HEK293 (cell line): ENCODE measurements at regions of chr9 and their contacts with region 1.

Region 1: GRCh38 chr9:129626079-129626624 is at the start of gene NTMT1:
- H3K4me3 ChIP-seq: peak within 1 kb of the TSS; percentile 62
- H3K27ac ChIP-seq: peak within 1 kb of the TSS; percentile 61
- H3K4me1 ChIP-seq: peaks cover 3% of the 10 kb centered on the region; the same call in 1 of the 2 replicates
- CTCF ChIP-seq: peak; percentile 6; the same call in 1 of the 2 replicates

Region 2: DNA sequence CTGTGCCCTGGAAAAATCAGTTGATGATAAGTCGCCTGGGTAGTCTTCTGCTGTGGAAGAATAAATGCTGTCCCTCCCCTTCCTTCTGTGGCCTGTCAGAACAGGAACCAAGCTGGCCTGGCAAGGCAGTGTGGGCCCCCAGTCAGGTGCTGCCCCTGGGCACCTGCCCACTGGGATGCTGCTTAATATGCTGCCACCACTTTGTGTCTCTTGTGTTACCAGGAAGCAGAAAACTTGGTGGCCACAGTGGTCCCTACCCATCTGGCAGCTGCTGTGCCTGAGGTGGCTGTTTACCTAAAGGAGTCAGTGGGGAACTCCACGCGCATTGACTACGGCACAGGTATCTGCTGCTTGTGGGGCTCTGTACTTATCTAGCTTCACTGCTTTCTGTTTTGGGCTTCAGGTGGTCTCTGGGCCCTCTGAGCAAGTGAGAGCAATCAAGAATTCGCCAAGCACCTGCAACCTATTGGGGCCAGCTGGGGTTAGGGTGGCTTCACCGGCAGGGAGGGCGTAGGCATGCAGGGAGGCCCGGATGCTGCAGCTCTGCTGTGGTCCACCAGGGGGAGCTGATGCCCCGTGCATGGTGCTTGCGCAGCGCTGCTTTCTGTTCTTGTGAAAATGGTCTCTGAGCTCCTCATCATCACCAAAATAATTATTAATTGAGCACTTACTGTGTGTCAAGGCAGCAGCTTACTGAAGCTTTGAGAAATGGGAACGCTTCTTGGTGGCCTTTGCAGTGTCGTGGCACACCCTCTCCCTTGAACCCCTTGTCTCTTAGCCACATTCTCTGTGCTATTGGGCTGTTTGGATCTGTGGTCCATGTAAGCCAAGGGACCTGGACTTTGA is 494.6 kb before region 1 on chr9:
- CTCF ChIA-PET with region 1: interaction called, 507 read pairs
- POLR2A ChIA-PET with region 1: interaction called, 10 read pairs
- H3K4me3 ChIP-seq: no peak overlapping the region
- H3K27ac ChIP-seq: no peak overlapping the region
- H3K4me1 ChIP-seq: no peaks in the 10 kb centered on the region
- CTCF ChIP-seq: peak; percentile 86

Region 3: DNA sequence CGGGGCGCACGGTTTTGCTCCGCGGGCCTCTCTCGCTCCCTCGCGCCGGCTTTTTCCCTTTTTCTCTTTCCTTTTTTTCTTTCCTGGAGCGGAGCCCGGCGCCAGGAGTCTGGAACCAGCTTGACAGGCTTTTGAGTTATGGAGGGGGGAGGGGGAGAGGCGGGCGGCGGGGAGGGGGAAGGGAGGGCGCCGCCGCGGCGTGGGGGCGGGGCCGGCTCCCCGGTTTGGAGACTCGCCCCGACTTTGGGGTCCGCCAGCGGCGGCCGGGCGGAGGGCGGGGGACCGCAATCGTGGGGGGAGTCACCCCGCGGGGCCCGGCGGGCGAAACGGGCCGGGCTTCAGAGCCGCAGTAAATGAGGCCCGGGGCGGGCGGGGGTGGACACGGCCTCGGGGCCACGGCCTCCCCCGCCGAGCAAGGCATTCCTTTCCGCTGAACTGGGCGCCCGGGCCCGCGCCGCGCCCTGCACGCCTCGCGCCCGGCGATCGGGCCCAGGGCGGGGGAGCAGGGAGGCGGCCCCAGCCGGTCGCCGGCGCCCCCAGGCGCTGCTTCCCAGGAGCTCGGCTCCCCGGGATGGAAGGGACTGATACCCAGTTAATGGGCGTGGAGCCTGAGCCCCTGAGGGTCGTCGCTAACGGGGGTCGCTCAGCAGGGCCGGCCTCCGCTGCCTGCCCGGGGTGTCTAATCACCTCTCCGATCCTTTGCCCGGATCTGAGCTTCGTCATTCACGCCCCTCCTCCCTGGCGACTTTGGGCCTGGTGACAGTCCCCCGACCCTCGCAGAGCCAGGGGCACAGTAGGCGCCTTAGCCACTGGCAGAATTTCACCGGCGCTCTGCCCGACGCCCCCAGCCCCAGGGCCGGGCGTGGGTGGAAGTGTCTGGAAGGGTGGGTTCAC is 143.4 kb before region 1 on chr9:
- CTCF ChIA-PET with region 1: no interaction called
- POLR2A ChIA-PET with region 1: no interaction called
- H3K4me3 ChIP-seq: peak overlapping the region; percentile 29
- H3K27ac ChIP-seq: peak overlapping the region; percentile 87
- H3K4me1 ChIP-seq: no peaks in the 10 kb centered on the region; the same call in 1 of the 2 replicates
- CTCF ChIP-seq: no peak

Region 4: DNA sequence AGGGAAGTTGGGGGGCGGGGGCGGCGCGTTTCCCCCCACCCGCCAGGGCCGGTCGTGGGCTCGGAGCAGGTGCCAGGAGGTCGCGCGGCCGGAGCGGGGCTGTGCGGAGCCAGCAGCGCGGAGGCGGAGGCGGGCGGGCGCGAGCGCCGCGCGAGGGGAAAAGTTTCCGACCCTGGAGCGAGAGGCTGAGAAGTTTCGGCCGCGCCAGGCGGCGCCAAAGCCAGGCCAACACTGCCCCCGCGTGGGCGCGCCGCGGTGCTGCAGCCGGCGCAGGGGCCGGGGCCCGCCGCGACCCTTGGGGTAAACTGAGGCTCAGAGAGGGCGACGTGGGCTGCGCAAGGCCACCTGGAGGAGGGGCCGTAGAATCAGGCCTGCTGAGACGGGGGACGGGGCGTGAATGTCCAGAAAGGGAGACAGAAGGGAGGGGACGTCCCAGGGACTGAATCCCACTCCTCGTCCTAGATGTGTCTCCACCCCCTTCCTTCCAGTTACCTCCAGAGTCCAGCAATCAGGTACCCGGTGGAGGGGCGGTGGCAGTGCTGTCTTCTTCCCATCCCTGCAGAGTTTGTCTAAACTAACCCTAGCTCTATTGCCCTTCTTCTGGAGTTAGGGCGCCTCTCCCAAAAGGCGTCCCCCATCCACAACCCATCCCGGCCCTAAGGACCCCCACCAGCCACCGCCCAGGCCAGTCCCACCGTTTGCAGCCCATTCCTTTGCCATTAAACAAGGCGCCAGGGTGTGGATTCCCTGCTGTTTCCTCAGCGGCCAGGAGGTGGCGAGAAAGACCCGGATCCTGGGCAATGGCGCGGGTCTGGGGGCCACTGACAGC is 15.5 kb before region 1 on chr9:
- CTCF ChIA-PET with region 1: interaction called, 101 read pairs
- POLR2A ChIA-PET with region 1: no interaction called
- H3K4me3 ChIP-seq: peak overlapping the region; percentile 44
- H3K27ac ChIP-seq: peak overlapping the region; percentile 49; the same call in 1 of the 2 replicates
- H3K4me1 ChIP-seq: no peaks in the 10 kb centered on the region; the same call in 1 of the 2 replicates
- CTCF ChIP-seq: peak; percentile 76; the same call in 1 of the 2 replicates

Region 5: GRCh38 chr9:129641746-129642513 is 15.8 kb after region 1 on chr9 and contains the start of gene ASB6:
- CTCF ChIA-PET with region 1: interaction called, 28 read pairs
- POLR2A ChIA-PET with region 1: interaction called, 57 read pairs
- H3K4me3 ChIP-seq: peak within 1 kb of the TSS; percentile 79
- H3K27ac ChIP-seq: peak within 1 kb of the TSS; percentile 70
- H3K4me1 ChIP-seq: peaks cover 11% of the 10 kb centered on the region
- CTCF ChIP-seq: peak; percentile 100

Region 6: GRCh38 chr9:129783516-129784361 is 157.6 kb after region 1 on chr9:
- CTCF ChIA-PET with region 1: interaction called, 18 read pairs
- POLR2A ChIA-PET with region 1: interaction called, 3 read pairs
- H3K4me3 ChIP-seq: no peak overlapping the region
- H3K27ac ChIP-seq: no peak overlapping the region
- H3K4me1 ChIP-seq: no peaks in the 10 kb centered on the region
- CTCF ChIP-seq: peak; percentile 74

Region 7: DNA sequence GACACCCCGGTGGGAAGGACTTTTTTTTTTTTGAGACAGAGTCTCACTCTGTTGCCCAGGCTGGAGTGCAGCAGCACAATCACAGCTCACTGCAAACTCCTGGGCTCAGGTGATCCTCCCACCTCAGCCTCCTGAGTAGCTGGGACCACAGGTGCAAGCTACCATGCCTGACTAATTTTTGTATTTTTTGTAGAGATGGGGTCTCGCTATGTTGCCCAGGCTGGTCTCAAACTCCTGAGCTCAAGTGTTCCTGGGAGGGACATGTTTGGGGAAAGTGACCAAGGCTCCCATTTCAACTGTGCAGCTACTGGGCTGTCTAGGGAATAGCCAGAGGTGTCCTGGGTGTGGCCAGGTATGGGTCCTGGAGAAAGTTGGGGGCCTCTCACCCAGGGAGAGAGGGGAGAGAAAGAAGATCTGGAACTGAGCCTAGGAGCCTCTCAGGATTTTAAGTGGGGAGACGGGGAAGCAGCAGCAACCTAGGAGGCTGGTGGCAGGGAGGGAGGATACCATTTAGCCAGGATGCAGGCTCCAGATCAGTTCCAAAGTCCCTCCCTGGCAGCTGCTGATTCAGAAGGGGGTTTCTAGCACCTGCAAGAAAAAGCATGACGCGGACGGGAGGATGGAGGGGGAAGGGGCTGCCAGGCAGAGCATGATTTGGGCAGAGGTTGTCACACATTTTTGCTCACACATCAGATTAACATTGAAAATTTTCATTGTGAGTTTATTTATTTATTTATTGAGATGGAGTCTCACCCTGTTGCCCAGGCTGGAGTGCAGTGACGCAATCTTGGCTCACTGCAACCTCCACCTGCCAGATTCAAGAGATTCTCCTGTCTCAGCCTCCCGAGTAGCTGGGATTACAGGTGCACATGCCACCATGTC is 170.1 kb after region 1 on chr9:
- CTCF ChIA-PET with region 1: interaction called, 16 read pairs
- POLR2A ChIA-PET with region 1: no interaction called
- H3K4me3 ChIP-seq: no peak overlapping the region
- H3K27ac ChIP-seq: no peak overlapping the region
- H3K4me1 ChIP-seq: no peaks in the 10 kb centered on the region
- CTCF ChIP-seq: no peak